Ovary (tissue), 10 donors: ENCODE measurements at regions of chr22 and their contacts with region 1.

Region 1: DNA sequence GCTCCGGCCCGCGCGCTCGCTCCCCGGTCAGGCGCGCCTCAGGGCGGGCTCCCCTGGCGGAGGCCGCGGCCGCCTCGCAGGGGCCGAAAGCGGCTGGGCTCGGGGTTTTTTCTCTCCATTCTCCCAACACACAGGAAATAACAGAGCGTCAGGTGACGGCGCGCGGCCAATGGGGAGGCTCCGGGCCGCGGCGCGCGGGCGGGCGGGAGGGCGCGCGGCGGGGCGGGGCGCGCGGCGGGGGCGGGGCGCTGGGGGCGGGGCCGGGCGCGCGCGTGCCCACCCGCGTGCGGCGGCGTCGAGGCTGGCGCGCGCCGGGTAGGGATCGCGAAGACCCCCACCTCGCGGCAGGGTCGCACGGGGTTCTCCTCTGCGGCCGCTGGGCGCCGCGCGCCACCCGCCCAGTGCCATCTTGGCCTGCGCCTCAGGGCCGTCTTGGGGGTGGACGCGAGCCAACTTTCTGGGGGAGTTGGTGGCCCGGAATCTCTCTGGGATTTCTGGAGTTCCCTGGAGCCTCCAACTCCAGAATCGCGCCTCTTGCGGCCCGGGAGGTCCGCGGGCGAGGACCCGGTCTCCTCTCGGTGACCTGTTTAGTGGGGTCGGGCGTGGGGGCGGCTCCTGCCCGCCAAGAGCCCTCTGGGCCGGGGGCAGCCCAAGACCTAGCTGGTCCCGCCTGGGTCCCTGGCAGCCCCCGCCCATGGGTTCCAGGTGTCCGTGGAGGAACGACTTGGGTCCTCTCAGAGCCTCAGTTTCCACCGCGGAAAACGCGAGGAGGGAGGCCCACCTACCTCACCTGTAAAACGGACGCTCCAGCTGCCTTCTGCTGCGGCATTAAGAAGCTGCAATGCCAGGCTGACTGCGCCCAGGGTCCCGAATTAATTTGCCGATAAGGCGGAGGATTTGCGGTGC is at the start of gene TCF20:
- DNase-seq: peak; percentile 77 to 86 (median 84)
- H3K4me3 ChIP-seq: peak within 1 kb of the TSS; percentile 97
- H3K27ac ChIP-seq: peak within 1 kb of the TSS; percentile 55 to 76
- H3K4me1 ChIP-seq: peaks cover 6% of the 10 kb centered on the region
- H3K27me3 ChIP-seq: no peaks in the 10 kb centered on the region
- CTCF ChIP-seq: no peak
- EP300 ChIP-seq: no peak
- POLR2A ChIP-seq: no peak
- total RNA-seq, gene TCF20: 18.1 to 42.0 (median 36.8) TPM

Region 2: GRCh38 chr22:42090596-42091454 is 179.9 kb before region 1 on chr22 and contains the start of gene NDUFA6:
- intact Hi-C with region 1: loop called in 1 of 4 experiments (anchors 10 kb)
- DNase-seq: peak; percentile 97 to 99 (median 98)
- H3K4me3 ChIP-seq: peak within 1 kb of the TSS; percentile 89
- H3K27ac ChIP-seq: peak within 1 kb of the TSS; percentile 74 to 86
- H3K4me1 ChIP-seq: peaks cover 8% of the 10 kb centered on the region
- H3K27me3 ChIP-seq: no peaks in the 10 kb centered on the region
- CTCF ChIP-seq: peak; percentile 79 to 99 (median 99)
- EP300 ChIP-seq: no peak
- POLR2A ChIP-seq: peak; percentile 78
- total RNA-seq, gene NDUFA6: 28.3 to 49.2 (median 43.4) TPM